Heart right ventricle (tissue), 16 donors: ENCODE measurements at regions of chr13 and their contacts with region 1.

Region 1: DNA sequence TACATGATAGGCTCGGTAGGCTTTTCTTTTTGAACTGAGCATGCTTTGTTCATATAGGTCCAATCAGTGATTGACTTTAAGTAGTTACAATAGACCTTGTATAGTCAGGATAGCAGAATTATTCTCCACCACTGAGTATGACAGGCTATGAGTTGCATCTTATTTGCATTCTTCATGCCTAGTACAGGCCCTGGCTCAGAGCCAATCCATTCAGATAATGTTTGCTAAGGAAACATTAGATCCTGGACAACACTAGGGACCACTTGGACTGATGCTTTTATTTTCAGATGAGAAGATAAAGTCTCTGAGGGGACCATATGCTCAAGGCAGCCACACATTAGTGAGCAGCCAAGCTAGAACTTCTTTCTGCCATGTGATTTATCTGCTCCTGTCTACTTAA is 133.9 kb downstream of the KL start:
- DNase-seq: no peak
- ATAC-seq: no peak
- H3K4me3 ChIP-seq: no peak overlapping the region
- H3K27ac ChIP-seq: peak overlapping the region in 2 of 10 donors; percentile 22 to 59
- H3K4me1 ChIP-seq: peaks cover 0 to 47% (median 40%) of the 10 kb centered on the region in 9 donors
- H3K27me3 ChIP-seq: no peaks in the 10 kb centered on the region
- CTCF ChIP-seq: no peak

Region 2: DNA sequence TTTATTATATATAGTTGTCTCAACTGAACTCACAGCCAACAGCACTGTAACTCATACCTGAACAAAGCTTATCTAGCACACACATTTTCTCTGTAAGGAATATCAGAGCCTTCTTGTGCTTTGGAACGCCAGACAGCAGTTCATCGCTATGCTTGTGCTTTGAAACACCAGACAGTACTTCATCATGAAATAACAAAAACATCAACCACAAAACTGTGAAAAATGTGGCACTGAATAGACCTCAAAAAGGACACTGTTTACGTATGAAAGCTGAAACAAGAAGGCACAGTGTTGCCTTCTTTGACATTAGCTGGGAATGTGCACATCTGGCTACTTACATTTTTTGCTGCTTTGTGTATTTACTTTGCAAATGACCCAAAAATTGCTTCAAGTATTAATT is 403.7 kb before region 1 on chr13:
- intact Hi-C with region 1: no loop called
- DNase-seq: no peak
- ATAC-seq: no peak
- H3K4me3 ChIP-seq: no peak overlapping the region
- H3K27ac ChIP-seq: no peak overlapping the region
- H3K4me1 ChIP-seq: peaks cover 0 to 5% (median 0%) of the 10 kb centered on the region in 9 donors
- H3K27me3 ChIP-seq: no peaks in the 10 kb centered on the region
- CTCF ChIP-seq: no peak

Region 3: GRCh38 chr13:33132644-33133440 is 17.3 kb before region 1 on chr13:
- intact Hi-C with region 1: loop called in 1 of 10 experiments (anchors 2 kb)
- DNase-seq: no peak
- ATAC-seq: no peak
- H3K4me3 ChIP-seq: no peak overlapping the region
- H3K27ac ChIP-seq: peak overlapping the region in 1 of 10 donors; percentile 14
- H3K4me1 ChIP-seq: peaks cover 0 to 48% (median 35%) of the 10 kb centered on the region in 9 donors
- H3K27me3 ChIP-seq: no peaks in the 10 kb centered on the region
- CTCF ChIP-seq: no peak